Endothelial cell of umbilical vein (primary cell): ENCODE measurements at regions of chr2 and their contacts with region 1.

Region 1: GRCh38 chr2:240434728-240435456 is 571 bp upstream of the GPC1 start:
- DNase-seq: no peak
- H3K4me3 ChIP-seq: peak overlapping the region; percentile 12 to 36 (median 26)
- H3K27ac ChIP-seq: no peak overlapping the region
- H3K4me1 ChIP-seq: no peaks in the 10 kb centered on the region
- H3K27me3 ChIP-seq: peaks cover 7 to 15% of the 10 kb centered on the region in 2 experiments
- CTCF ChIP-seq: no peak
- POLR2A ChIP-seq: no peak

Region 2: GRCh38 chr2:240021488-240022104 is 413.3 kb before region 1 on chr2:
- CTCF ChIA-PET with region 1: no interaction called
- POLR2A ChIA-PET with region 1: no interaction called
- dilution Hi-C with region 1: no loop called
- intact Hi-C with region 1: loop called (anchors 1 kb)
- DNase-seq: peak; percentile 65
- H3K4me3 ChIP-seq: no peak overlapping the region
- H3K27ac ChIP-seq: no peak overlapping the region
- H3K4me1 ChIP-seq: peaks cover 10% of the 10 kb centered on the region
- H3K27me3 ChIP-seq: no peaks in the 10 kb centered on the region
- CTCF ChIP-seq: peak; percentile 95 to 97
- POLR2A ChIP-seq: no peak

Region 3: DNA sequence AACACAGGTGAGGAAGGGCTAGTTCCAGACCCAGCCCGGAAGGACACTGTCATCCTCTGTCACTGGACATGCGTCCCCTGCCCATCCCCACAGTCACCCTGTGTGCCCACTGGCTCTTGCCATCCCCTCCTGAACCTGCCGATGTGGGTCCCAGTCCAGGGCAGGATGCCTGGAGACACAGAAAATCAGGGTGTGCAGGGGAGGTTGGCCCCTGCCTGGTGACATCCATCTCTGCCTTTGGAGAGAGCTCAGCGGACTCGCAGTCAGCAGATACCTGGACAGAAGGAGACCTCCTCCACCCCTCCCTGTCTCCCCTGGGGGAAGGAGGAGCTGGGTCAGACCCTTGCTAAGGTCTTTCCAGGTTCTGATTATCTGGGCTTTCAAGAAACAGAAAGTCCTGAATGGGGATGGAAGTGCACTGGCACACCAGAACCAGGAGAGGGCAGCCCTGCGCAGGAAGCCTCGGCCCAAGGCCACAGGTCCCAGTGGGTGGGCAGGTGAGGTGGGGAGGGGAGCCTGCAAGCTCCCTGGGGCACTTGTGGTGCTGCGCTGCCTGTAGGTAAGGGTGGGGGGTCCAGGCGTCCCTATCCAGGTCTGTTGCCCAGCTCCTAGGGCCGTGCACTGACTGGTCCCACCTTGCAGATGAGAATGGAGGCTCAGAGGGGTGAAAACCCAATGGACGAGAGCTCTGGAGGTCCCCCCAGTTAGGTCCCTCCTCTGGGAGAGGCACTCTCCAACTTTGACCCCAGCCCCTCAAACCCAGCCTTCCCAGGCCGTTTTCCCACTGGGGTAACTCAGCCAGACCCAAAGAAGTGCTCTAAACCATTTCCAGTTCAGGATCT is 284.7 kb before region 1 on chr2:
- CTCF ChIA-PET with region 1: interaction called, 3 read pairs
- POLR2A ChIA-PET with region 1: no interaction called
- dilution Hi-C with region 1: no loop called
- intact Hi-C with region 1: loop called (anchors 1 kb)
- DNase-seq: peak; percentile 22
- H3K4me3 ChIP-seq: no peak overlapping the region
- H3K27ac ChIP-seq: no peak overlapping the region
- H3K4me1 ChIP-seq: no peaks in the 10 kb centered on the region
- H3K27me3 ChIP-seq: no peaks in the 10 kb centered on the region
- CTCF ChIP-seq: peak; percentile 46 to 82
- POLR2A ChIP-seq: no peak

Region 4: DNA sequence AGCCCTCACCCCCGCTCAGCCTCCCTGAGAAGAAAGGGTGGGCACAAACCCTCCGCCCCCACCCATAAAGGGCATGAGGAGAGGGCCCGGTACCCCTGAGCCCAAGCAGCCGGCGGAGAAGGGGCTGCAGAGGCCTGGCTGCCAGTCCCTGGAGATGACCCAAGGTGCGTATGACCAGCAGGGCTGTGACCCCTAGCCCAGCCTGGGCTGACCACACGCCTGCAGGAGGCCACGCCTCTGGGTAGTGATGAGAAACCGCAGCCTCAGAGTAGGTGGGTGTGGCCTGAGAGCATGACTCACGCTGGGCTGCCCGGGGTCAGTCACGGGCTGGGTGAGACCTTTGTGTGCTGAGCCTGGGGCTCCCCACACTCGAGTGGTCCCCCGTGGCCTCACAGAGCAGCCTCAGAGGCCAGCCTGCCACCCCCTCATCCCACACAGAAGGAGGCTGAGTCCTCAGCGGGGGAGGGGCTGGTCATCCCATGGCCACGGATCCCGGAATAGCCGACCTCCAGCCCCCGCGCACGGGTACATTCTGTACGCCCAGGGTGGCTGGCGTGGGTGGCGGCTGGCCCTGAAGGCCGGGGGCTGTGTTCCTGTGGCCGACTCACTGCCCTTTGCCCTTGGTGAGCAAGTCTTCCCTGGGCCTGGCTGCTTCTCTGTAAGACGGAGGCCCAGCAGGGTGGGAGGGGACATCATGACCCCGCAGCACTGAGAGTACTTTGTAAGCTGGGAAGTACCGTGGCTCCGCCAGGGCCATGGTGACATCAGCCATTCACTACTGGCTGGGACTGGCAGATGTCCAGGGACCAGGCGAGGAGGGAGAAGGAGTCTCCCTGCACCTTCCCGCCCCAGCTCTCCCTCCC is 183.7 kb before region 1 on chr2:
- CTCF ChIA-PET with region 1: no interaction called
- POLR2A ChIA-PET with region 1: no interaction called
- dilution Hi-C with region 1: no loop called
- intact Hi-C with region 1: loop called (anchors 1 kb)
- DNase-seq: peak; percentile 51
- H3K4me3 ChIP-seq: no peak overlapping the region
- H3K27ac ChIP-seq: peak overlapping the region; percentile 59
- H3K4me1 ChIP-seq: no peaks in the 10 kb centered on the region
- H3K27me3 ChIP-seq: no peaks in the 10 kb centered on the region
- CTCF ChIP-seq: no peak
- POLR2A ChIP-seq: no peak

Region 5: GRCh38 chr2:240320204-240320993 is 114.5 kb before region 1 on chr2:
- CTCF ChIA-PET with region 1: no interaction called
- POLR2A ChIA-PET with region 1: no interaction called
- dilution Hi-C with region 1: no loop called
- intact Hi-C with region 1: loop called (anchors 2 kb)
- DNase-seq: peak; percentile 72
- H3K4me3 ChIP-seq: no peak overlapping the region
- H3K27ac ChIP-seq: peak overlapping the region; percentile 28
- H3K4me1 ChIP-seq: peaks cover 10% of the 10 kb centered on the region
- H3K27me3 ChIP-seq: no peaks in the 10 kb centered on the region
- CTCF ChIP-seq: no peak
- POLR2A ChIP-seq: no peak

Region 6: DNA sequence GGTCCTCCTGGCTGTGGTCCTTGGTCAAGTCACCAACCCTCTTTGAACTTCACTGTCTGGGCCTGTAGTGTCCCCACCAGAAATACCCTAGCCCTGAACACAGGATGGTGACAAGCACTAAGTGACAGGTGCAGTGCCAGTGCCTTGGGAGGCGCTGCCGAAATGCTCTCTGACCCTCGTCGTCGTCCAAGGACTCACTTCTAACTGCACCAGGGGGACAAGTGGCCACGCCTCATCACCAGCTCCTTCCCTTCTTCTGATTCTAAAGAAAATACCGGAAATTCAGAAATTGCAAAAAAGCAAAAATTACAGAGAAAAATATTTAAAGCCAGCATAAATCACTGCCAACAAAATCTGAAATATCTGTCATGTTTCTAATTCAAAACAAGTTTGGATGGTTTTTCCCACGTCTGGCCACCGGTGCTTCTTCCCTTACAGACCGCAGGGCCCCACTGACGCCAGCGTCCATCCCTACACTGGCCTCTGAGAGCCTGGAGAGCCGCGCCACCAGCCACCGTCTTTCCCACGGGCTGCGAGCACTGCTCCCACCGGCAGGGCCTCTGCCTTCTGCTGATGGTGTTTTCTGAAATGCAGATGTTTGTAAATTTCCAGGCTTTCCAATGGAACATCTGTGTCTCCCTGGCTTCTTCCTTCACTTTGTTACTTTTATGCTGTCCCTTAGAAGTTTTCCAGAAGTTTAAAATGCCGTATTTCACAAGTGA is 36.8 kb before region 1 on chr2:
- CTCF ChIA-PET with region 1: no interaction called
- POLR2A ChIA-PET with region 1: no interaction called
- dilution Hi-C with region 1: no loop called
- intact Hi-C with region 1: no loop called
- DNase-seq: no peak
- H3K4me3 ChIP-seq: no peak overlapping the region
- H3K27ac ChIP-seq: no peak overlapping the region
- H3K4me1 ChIP-seq: no peaks in the 10 kb centered on the region
- H3K27me3 ChIP-seq: no peaks in the 10 kb centered on the region
- CTCF ChIP-seq: no peak
- POLR2A ChIP-seq: no peak

Region 7: DNA sequence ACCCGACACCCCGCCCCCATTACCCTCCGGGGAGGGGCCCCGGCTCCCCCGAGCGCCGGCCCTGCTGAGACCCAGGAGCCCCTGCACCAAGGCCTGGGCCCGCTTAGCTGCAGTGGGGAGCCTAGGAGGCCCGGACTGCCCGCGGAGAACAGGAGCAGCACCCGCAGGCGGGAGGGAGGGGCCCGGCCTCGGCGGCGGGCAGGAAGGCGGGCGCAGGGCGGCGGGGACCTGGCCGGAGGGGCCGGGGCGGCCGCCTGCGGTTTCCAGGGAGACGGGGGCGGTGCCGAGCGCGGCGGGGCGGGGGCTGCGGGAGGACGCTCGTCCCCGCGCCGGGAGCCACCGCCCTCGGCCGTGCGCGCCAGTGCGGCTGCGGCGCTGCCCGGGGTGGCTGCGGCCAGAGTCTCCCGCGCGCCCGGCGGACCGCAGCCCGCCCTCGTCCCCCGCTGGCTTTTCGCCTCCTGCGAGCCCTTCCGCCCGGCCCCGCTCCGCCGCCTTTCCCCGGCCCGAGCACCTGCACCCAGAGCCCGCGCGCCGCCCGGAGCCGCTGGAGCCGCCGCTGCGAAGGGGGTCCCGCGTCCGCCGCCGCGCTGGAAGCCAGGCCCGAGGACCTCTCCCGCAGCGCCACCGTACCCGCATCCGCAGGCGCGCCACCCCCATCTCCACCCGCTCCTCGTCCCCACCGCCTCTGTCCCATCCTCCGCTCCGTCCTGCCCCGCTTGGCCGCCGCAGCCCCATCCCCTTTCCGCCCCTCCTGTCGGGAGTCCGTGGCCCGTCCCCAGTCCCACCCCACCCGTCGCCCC is 17.8 kb after region 1 on chr2:
- CTCF ChIA-PET with region 1: no interaction called
- POLR2A ChIA-PET with region 1: no interaction called
- dilution Hi-C with region 1: no loop called
- intact Hi-C with region 1: loop called (anchors 1 kb)
- DNase-seq: peak; percentile 11
- H3K4me3 ChIP-seq: peak overlapping the region; percentile 17 to 40 (median 30)
- H3K27ac ChIP-seq: no peak overlapping the region
- H3K4me1 ChIP-seq: no peaks in the 10 kb centered on the region
- H3K27me3 ChIP-seq: peaks cover 22 to 24% of the 10 kb centered on the region in 2 experiments
- CTCF ChIP-seq: no peak
- POLR2A ChIP-seq: no peak

Region 8: DNA sequence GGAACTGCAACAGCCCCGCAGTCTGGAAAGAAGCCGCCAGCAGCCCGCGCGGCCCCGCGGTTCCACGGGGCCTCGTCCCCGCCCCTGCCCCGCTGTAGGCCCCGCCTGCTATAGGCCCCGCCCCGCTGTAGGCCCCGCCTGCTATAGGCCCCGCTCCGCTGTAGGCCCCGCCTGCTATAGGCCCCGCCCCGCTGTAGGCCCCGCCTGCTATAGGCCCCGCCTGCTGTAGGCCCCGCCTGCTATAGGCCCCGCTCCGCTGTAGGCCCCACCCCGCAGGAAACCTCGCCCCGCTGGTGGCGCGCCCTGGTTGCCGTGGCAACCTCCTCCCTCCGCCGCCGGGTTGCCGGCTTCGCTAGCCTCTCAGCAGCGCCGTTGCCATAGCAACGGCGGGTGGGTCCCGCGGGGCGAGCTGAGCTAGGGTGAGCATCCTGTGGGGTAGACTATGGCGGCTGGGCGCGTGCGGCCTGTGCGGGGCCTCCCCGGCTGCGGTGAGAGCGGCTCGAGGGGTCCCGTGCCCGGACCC is 397.4 kb after region 1 on chr2:
- CTCF ChIA-PET with region 1: no interaction called
- POLR2A ChIA-PET with region 1: no interaction called
- dilution Hi-C with region 1: no loop called
- intact Hi-C with region 1: loop called (anchors 5 kb)
- DNase-seq: peak; percentile 80
- H3K4me3 ChIP-seq: no peak overlapping the region
- H3K27ac ChIP-seq: no peak overlapping the region
- H3K4me1 ChIP-seq: peaks cover 5% of the 10 kb centered on the region
- H3K27me3 ChIP-seq: peaks cover 6 to 19% of the 10 kb centered on the region in 2 experiments
- CTCF ChIP-seq: no peak
- POLR2A ChIP-seq: no peak